Colonic mucosa (tissue), 4 donors: ENCODE measurements at regions of chr19 and their contacts with region 1.

Region 1: DNA sequence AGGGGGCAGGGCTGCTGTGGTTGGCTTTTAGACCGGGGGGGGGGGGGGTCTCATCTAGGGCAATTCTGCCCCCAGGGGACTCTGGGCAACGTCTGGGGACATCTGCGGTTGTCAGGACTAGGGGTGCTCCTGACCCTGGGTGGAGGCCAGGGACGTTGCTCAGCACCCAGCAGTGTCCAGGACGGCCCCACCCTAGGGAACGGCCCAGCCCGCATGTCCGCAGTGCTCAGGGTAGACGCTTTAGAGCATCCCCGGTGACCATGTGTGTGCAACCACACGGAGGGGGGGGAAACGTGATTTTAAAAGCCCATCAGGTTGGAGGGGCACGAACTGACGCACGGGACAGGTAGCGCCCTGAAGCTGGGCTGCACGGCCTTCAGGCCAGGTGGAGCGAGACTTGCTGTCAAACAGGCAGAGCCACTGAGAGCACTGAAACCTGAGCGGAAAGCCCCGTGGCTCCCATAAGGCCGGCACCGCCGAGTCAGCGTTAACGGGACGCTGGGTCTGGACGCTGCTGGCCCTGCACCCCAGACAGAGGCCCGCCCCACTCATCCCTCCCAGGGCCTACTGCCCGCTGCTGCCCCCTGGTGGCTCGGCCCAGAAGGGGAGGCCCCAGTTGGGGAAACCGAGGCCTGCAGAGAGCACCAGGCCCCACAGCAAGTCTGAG is 8.3 kb downstream of the CACTIN start:
- DNase-seq: peak; percentile 75
- H3K4me3 ChIP-seq: no peak overlapping the region
- H3K27ac ChIP-seq: no peak overlapping the region
- H3K4me1 ChIP-seq: no peaks in the 10 kb centered on the region
- H3K27me3 ChIP-seq: no peaks in the 10 kb centered on the region
- CTCF ChIP-seq: peak; percentile 97

Region 2: GRCh38 chr19:3544742-3545668 is 73.3 kb before region 1 on chr19:
- intact Hi-C with region 1: loop called (anchors 2 kb)
- DNase-seq: peak; percentile 82
- H3K4me3 ChIP-seq: no peak overlapping the region
- H3K27ac ChIP-seq: no peak overlapping the region
- H3K4me1 ChIP-seq: no peaks in the 10 kb centered on the region
- H3K27me3 ChIP-seq: no peaks in the 10 kb centered on the region
- CTCF ChIP-seq: peak; percentile 94

Region 3: DNA sequence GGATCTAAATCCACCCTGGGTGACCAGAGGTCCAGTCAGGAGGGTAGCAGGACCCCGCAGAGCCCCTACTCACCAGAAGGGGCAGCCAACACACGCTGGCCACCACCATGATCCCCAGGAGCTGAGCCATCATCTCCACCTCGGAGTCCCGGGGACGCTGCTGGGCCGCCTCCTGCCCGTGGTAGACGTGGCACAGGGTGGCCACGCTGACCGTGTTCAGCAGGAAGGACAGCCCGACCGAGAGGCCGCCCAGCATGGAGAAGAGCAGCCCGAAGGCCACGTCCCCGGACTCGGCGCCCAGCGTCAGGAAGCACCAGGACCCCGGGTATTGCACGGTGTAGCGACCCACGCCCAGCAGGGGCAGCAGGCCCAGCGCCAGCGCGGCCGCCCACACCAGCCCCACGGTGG is 18.5 kb before region 1 on chr19:
- intact Hi-C with region 1: no loop called
- DNase-seq: no peak
- H3K4me3 ChIP-seq: no peak overlapping the region
- H3K27ac ChIP-seq: no peak overlapping the region
- H3K4me1 ChIP-seq: no peaks in the 10 kb centered on the region
- H3K27me3 ChIP-seq: no peaks in the 10 kb centered on the region
- CTCF ChIP-seq: no peak

Region 4: DNA sequence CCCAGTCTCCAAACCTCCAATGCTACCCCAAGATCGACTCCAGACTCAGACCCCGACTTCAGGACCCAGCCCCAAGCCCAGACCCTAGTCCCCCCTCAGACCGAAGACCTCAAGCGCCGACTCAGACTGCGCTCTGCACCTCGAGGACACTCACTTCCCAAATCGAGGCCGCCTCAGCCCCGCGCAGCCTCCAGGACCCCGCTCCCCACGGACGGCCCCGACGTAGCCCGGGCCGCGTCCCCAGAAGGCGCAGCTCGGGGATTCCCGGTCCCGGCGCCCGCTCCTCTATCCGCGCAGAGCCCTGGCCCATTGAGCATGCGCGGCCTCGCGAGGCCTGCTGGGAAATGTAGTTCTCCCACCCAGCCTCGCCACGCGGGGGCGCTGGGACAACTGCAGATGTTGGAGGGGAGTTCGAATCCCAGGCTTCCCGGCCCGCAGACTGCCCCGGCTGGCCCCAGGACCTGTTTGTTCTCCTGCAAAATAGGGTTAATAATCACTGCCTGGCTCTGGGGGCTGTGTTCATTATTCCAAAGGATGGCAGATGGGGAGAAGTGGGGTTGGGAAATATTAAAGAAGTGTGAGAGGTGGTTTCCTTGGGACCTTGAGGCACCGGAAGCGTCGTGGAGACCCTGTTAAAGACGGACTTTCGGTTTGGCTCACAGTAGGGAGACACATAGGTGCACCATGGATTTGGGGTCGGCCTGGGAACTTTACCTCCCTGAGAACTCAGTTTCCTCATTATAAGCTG is 143.3 kb after region 1 on chr19 and contains the start of gene APBA3:
- intact Hi-C with region 1: no loop called
- DNase-seq: peak; percentile 96
- H3K4me3 ChIP-seq: peak within 1 kb of the TSS; percentile 80
- H3K27ac ChIP-seq: peak within 1 kb of the TSS; percentile 90
- H3K4me1 ChIP-seq: peaks cover 7% of the 10 kb centered on the region
- H3K27me3 ChIP-seq: no peaks in the 10 kb centered on the region
- CTCF ChIP-seq: peak; percentile 70
- total RNA-seq, gene APBA3: 21.0 to 29.3 TPM